ENCODE measurements at regions of chr11 and their contacts with region 1.

Region 1: DNA sequence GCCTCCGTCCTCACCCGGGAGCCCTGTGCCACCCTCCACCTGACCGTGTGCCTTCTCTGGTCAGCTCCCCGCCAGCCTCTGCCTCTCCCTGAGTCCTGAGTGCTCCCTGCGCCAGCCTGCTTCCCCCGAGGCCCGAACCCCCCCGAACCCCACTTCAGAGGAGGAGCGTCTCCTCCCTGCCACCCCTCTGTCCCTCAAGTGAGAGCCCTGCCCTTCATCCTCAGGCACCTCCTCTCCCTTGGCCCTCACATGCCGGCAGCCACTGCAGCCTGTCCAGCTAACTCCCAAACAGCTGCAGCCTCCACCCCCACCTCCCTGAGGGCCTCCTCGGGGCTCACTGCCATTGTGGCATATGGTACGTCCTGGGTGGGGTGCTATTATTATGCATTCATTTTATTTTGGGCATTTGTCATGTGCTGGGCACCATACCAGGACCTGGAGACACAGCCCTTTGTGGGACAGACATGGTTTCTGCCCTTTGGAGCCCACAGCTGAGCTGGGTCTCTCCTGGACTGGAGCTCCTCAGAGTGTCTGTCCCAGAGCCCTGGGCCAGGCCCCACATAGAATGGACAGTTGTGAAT is 67.2 kb downstream of the MYO7A start:
- H3K4me3 ChIP-seq: no peak overlapping the region
- H3K27ac ChIP-seq: no peak overlapping the region
- H3K4me1 ChIP-seq: no peaks in the 10 kb centered on the region
- CTCF ChIP-seq: no peak

Region 2: DNA sequence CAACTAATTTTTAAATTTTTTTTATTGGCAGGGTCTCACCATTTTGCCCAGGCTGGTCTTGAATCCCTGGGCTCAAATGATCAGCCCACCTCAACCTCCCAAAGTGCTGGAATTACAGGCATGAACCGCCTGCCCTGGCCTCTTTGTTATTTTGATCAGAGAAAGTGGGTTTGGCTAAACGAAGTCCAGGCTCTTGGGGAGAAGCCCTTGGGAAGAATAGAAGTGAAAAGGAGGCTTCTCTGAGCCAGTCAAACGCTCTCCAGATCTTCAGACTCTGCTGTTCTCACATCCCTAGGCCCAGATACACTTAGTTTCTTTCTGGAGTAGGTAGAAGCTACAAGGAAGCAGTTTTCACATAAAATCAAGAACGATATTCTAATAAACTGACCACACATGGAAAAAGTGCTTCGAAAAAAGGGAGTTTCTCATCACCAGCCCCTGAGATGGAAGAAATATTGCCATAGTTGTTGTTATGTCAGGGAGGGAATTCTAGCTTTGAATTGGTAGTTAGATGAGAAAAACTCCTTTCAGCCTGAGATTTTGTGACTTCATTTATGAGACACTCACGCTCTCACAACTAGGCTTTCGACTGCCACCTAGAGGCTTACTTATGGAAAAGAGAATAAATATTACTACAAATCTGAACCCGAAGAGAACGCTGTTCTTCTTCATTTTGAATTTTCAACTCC is 352.7 kb after region 1 on chr11:
- CTCF ChIA-PET with region 1: interaction called, 40 read pairs
- POLR2A ChIA-PET with region 1: no interaction called
- H3K4me3 ChIP-seq: no peak overlapping the region
- H3K27ac ChIP-seq: no peak overlapping the region
- H3K4me1 ChIP-seq: no peaks in the 10 kb centered on the region
- CTCF ChIP-seq: no peak

Region 3: DNA sequence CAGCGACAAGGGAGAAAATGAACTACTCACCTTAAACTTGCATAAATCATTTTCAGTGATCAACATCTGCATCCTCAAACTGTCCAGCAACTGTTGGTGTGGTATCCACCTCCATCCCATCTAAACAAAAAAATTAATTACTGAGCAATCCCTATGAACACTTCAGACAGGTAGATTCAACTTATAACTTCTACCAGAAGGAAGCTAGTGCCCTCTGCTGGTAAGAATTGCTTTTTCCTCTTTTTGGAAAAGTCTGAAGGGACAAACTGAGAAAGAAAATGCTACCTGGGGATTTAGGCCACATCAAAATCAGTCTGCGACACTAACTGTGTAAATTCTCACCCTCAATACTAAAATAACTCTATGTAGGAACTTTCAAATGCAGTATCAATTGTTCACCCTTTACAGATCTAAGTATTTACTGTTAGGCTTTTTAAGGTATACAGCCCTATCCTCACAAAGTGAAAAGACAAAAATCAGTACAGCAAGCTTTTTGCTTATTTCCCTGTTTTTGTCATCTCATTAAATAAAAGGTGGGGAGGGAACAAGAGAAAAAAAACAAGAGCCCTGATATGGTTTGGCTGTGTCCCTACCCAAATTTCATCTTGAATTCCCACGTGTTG is 424.4 kb after region 1 on chr11:
- CTCF ChIA-PET with region 1: interaction called, 18 read pairs
- POLR2A ChIA-PET with region 1: no interaction called
- H3K4me3 ChIP-seq: no peak overlapping the region
- H3K27ac ChIP-seq: no peak overlapping the region
- H3K4me1 ChIP-seq: no peaks in the 10 kb centered on the region
- CTCF ChIP-seq: no peak; the same call in 1 of the 2 replicates